ENCODE measurements at regions of chr18 and their contacts with region 1.

Region 1: DNA sequence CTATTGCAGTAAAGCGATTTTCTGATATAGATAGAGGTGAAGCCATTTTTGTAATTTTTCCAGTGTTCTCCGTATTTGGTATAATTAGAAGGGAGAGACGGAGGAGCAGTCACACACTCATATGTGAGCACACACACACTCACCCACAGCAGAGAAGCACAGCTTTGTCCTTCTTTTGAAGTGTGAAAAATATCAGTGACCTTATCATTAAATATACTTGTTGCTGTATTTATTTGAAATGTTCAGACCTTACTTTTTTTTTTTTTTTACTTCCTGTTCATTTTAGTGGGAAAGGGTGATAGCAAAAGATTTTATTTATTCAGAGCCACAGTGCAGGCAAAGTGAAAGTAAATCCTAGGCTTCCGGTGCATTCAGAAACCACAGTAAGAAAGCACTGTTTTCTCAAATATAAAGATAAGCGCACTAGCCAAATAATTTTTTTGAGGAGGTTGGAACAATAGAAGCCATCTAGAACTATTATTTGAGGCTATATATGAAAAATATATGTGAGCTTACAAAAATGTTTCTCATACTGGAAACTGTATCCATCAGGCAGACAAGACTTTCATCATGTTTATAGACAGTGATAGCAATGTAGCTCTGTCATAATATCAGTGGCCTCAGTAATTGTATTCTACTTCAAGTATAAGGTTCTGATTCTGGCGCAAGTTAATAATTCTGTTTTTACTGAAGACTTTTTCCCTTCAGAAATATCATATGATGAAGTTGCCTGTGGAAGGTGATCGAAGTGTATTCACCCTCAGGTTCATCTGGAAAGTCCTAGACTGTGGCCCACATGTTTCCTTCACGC is 37.2 kb downstream of the TSHZ1 start:
- DNase-seq: no peak
- ATAC-seq: peak; percentile 47
- H3K4me3 Mint-ChIP-seq: peak overlapping the region; percentile 77
- H3K27ac Mint-ChIP-seq: peak overlapping the region; percentile 98
- H3K4me1 Mint-ChIP-seq: peaks cover 52% of the 10 kb centered on the region
- H3K27me3 Mint-ChIP-seq: no peaks in the 10 kb centered on the region

Region 2: GRCh38 chr18:74896390-74896991 is 351.3 kb before region 1 on chr18:
- CTCF ChIA-PET with region 1: no interaction called
- POLR2A ChIA-PET with region 1: no interaction called
- intact Hi-C with region 1: loop called in 1 of 2 experiments (anchors 10 kb)
- DNase-seq: peak; percentile 62
- ATAC-seq: peak; percentile 60
- H3K4me3 Mint-ChIP-seq: no peak overlapping the region
- H3K27ac Mint-ChIP-seq: no peak overlapping the region
- H3K4me1 Mint-ChIP-seq: peaks cover 3% of the 10 kb centered on the region
- H3K27me3 Mint-ChIP-seq: no peaks in the 10 kb centered on the region

Region 3: DNA sequence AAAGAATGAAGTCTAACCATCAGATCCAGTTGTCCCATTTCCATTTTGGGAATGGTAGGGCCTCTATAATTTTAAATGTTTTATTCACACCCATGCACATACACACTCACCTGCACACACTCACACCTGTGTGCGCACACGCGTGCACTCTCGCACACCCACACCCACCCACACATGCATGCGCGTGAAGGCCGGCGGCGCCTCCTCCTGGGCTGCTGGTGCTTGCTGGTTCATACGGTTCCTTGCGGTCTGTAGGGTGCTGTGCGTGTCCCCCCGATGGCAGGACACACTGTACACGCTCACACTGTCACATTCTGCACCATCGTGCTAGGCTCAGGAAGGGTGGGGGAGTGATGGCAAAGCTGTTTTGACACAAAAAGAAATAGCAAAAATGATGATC is 26.0 kb after region 1 on chr18:
- CTCF ChIA-PET with region 1: no interaction called
- POLR2A ChIA-PET with region 1: no interaction called
- intact Hi-C with region 1: no loop called
- DNase-seq: no peak
- ATAC-seq: no peak
- H3K4me3 Mint-ChIP-seq: no peak overlapping the region
- H3K27ac Mint-ChIP-seq: no peak overlapping the region
- H3K4me1 Mint-ChIP-seq: peaks cover 46% of the 10 kb centered on the region
- H3K27me3 Mint-ChIP-seq: no peaks in the 10 kb centered on the region

Region 4: DNA sequence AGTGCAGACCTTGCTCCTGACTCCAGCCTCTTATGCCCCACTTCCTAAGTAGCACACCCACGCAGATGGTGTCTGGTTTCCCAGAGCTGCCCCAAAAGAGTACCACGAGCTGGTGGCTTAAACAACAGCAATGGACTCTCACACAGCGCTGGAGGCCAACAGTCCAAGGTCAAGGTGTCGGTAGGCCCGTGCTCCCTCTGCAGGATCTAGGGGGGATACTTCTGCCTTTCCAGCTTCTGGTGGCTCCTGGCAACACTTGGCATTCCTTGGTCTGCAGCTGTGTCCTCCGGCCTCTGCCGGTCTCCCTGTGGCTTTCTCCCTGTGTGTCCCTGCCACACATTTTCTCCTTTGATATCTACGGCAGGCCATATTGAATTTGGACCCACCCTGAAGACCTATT is 61.7 kb after region 1 on chr18:
- CTCF ChIA-PET with region 1: no interaction called
- POLR2A ChIA-PET with region 1: no interaction called
- intact Hi-C with region 1: loop called in 1 of 2 experiments (anchors 10 kb)
- DNase-seq: no peak
- ATAC-seq: no peak
- H3K4me3 Mint-ChIP-seq: no peak overlapping the region
- H3K27ac Mint-ChIP-seq: no peak overlapping the region
- H3K4me1 Mint-ChIP-seq: no peaks in the 10 kb centered on the region
- H3K27me3 Mint-ChIP-seq: peaks cover 1% of the 10 kb centered on the region